HCT116 (cell line): ENCODE measurements at regions of chr15 and their contacts with region 1.

Region 1: GRCh38 chr15:85296615-85297402 is 83.6 kb upstream of the AKAP13 start:
- DNase-seq: peak; percentile 77
- ATAC-seq: peak; percentile 98
- H3K4me3 ChIP-seq: peak overlapping the region; percentile 21 to 44; a peak in 3 of 4 replicates
- H3K27ac ChIP-seq: no peak overlapping the region
- H3K4me1 ChIP-seq: peaks cover 0 to 7% of the 10 kb centered on the region in 2 experiments; a peak in 1 of 4 replicates
- H3K27me3 ChIP-seq: no peaks in the 10 kb centered on the region
- CTCF ChIP-seq: peak; percentile 79 to 82 (median 82); a peak in 5 of 6 replicates
- POLR2A ChIP-seq: no peak
- RAD21 ChIP-seq: peak; percentile 97

Region 2: GRCh38 chr15:85324202-85324601 is 27.4 kb after region 1 on chr15:
- CTCF ChIA-PET with region 1: no interaction called
- POLR2A ChIA-PET with region 1: no interaction called
- RAD21 ChIA-PET with region 1: no interaction called
- intact Hi-C with region 1: no loop called
- DNase-seq: no peak
- ATAC-seq: no peak
- H3K4me3 ChIP-seq: no peak overlapping the region
- H3K27ac ChIP-seq: no peak overlapping the region
- H3K4me1 ChIP-seq: no peaks in the 10 kb centered on the region
- H3K27me3 ChIP-seq: no peaks in the 10 kb centered on the region
- CTCF ChIP-seq: no peak
- POLR2A ChIP-seq: no peak
- RAD21 ChIP-seq: no peak

Region 3: DNA sequence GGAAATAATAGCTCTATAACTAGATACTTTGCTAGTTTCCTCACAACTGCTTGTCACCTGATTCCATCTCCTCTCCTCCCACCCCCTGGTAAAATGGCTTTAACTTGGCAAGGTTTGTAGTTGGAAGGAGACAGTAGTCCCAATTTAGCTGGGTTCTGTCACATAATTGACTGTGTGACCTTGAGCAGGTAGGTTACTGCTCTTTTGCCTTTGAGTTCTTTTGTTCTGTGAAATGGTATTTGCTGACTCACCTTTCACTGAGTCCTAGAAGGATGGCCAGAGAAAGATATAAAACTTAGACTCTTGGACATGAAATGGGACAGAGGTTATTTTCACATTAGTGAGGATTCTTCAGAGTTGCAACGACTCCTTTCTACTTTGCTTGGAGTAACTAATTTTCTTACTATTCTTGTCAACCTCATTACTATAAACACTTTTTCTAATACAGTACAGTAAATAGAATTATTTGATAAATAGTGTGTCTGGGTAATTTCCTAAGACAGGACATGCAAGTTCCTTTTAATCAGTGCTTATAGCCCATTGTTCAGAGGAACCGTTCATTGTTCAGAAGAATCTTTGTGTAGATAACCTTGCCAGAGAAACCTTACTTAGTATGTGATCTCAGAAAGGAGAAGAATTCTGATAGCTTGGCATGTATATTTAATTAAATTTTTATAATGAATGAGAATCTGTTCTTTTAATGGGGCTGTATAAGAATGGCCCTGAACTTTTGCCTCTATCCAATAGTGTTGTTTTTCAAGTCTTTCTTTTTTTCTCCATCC is 97.9 kb after region 1 on chr15:
- CTCF ChIA-PET with region 1: no interaction called
- POLR2A ChIA-PET with region 1: no interaction called
- RAD21 ChIA-PET with region 1: no interaction called
- intact Hi-C with region 1: no loop called
- DNase-seq: no peak
- ATAC-seq: peak; percentile 83
- H3K4me3 ChIP-seq: peak overlapping the region in 1 of 2 experiments; percentile 22; a peak in 2 of 4 replicates
- H3K27ac ChIP-seq: peak overlapping the region; percentile 10; the same call in 1 of the 2 replicates
- H3K4me1 ChIP-seq: peaks cover 38 to 52% of the 10 kb centered on the region in 2 experiments
- H3K27me3 ChIP-seq: no peaks in the 10 kb centered on the region
- CTCF ChIP-seq: no peak
- POLR2A ChIP-seq: no peak
- RAD21 ChIP-seq: no peak

Region 4: GRCh38 chr15:85412956-85413854 is 116.4 kb after region 1 on chr15:
- CTCF ChIA-PET with region 1: interaction called, 33 read pairs
- POLR2A ChIA-PET with region 1: no interaction called
- RAD21 ChIA-PET with region 1: interaction called in 1 of 2 experiments, 11 read pairs
- intact Hi-C with region 1: loop called (anchors 1 kb)
- DNase-seq: peak; percentile 88
- ATAC-seq: peak; percentile 98
- H3K4me3 ChIP-seq: peak overlapping the region; percentile 7 to 18; a peak in 3 of 4 replicates
- H3K27ac ChIP-seq: peak overlapping the region; percentile 69
- H3K4me1 ChIP-seq: peaks cover 36 to 58% of the 10 kb centered on the region in 2 experiments
- H3K27me3 ChIP-seq: no peaks in the 10 kb centered on the region
- CTCF ChIP-seq: 0 out of 6 replicates have a peak, but pooled peaks of 1 of the 3 experiments have one; percentile 31
- POLR2A ChIP-seq: no peak
- RAD21 ChIP-seq: peak; percentile 25; the same call in 1 of the 2 replicates

Region 5: DNA sequence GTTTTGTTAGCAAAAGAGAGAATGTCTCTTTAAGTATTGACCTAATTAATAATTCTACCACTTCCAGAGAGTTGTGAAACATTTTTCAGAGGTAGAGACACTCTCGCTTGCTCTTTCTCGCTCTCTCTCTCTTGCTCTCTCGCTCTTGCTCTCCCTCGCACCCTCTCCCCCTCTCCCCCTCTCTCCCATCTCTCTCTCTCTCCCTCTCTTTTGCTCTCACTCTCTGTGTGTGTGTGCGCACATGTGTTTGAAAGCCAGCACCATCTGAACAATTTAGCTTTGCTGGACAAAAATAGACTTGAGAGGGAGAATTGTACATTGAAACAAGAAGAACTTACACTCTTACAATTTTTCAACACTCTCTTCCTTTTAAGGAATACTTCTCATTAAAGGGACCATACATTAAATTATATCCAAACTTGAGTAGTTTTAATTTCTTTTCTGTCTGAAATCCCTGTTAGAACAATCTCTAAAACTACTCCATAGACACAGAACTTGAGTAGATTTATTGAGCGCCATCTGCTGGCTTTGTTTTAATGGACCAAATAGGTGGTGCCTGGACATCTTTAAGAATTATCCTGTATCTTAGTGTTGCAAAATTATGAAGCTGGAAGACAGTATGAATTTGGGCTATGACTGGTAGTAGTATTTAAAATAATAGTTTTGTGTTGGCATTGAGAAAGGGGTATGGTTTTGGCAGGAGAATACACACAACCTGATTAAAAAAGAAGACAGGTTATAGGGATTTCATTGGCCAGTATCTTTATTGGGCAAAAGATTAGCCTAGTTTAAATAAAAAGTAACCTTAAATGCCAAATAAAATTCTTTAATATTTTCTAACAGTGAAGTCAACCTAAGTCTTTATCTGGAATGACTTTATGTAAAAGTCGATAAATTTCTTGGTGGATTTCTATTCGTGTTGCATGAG is 208.2 kb after region 1 on chr15:
- CTCF ChIA-PET with region 1: interaction called, 13 read pairs
- POLR2A ChIA-PET with region 1: no interaction called
- RAD21 ChIA-PET with region 1: interaction called, 8 to 14 read pairs
- intact Hi-C with region 1: loop called (anchors 2 kb)
- DNase-seq: peak; percentile 53
- ATAC-seq: peak; percentile 83
- H3K4me3 ChIP-seq: no peak overlapping the region
- H3K27ac ChIP-seq: no peak overlapping the region
- H3K4me1 ChIP-seq: no peaks in the 10 kb centered on the region
- H3K27me3 ChIP-seq: no peaks in the 10 kb centered on the region
- CTCF ChIP-seq: peak; percentile 55 to 78 (median 65); a peak in 5 of 6 replicates
- POLR2A ChIP-seq: no peak
- RAD21 ChIP-seq: peak; percentile 70

Region 6: GRCh38 chr15:85730001-85730820 is 433.4 kb after region 1 on chr15:
- CTCF ChIA-PET with region 1: interaction called, 13 read pairs
- POLR2A ChIA-PET with region 1: no interaction called
- RAD21 ChIA-PET with region 1: interaction called, 3 read pairs
- intact Hi-C with region 1: loop called (anchors 10 kb)
- DNase-seq: peak; percentile 47
- ATAC-seq: peak; percentile 93
- H3K4me3 ChIP-seq: no peak overlapping the region
- H3K27ac ChIP-seq: no peak overlapping the region
- H3K4me1 ChIP-seq: no peaks in the 10 kb centered on the region
- H3K27me3 ChIP-seq: no peaks in the 10 kb centered on the region
- CTCF ChIP-seq: peak; percentile 61 to 81 (median 68)
- POLR2A ChIP-seq: no peak
- RAD21 ChIP-seq: peak; percentile 79

Region 7: DNA sequence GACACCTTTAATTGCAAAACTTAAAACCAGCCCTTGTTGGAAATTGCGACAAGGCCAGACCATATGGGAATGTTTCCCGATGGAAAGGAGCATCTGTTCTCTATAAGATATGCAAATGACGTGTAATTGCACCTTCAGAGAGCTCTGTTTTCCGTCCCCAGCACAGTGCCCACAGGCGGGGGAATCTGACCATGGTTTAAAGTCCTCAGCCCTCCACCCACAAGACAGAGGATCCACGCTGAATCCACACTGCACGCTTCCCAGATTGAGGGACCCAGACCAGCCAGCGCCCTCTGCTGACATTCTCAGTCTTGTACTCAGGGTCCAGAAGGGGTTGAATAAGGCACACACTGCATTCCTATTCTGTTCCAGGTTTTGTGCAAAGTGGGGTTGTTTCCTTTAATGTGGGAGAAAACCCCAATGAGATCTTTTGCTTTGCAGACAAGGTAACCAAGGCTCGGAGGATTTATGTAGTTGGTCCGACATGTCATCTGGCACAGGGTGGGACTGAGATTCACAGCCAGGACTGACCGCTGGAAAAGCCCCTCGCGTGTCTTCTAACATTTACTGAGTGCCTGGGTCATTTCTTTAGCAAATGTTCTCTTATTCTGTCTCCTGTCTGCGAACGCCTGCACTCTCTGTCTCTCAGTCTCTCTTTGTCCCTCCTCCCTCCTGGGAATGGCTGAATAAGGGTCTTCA is 534.8 kb after region 1 on chr15:
- CTCF ChIA-PET with region 1: no interaction called
- POLR2A ChIA-PET with region 1: no interaction called
- RAD21 ChIA-PET with region 1: no interaction called
- intact Hi-C with region 1: loop called (anchors 2 kb)
- DNase-seq: peak; percentile 37
- ATAC-seq: peak; percentile 99
- H3K4me3 ChIP-seq: no peak overlapping the region
- H3K27ac ChIP-seq: no peak overlapping the region
- H3K4me1 ChIP-seq: no peaks in the 10 kb centered on the region
- H3K27me3 ChIP-seq: no peaks in the 10 kb centered on the region
- CTCF ChIP-seq: peak; percentile 70 to 87 (median 76)
- POLR2A ChIP-seq: no peak
- RAD21 ChIP-seq: peak; percentile 83

Region 8: DNA sequence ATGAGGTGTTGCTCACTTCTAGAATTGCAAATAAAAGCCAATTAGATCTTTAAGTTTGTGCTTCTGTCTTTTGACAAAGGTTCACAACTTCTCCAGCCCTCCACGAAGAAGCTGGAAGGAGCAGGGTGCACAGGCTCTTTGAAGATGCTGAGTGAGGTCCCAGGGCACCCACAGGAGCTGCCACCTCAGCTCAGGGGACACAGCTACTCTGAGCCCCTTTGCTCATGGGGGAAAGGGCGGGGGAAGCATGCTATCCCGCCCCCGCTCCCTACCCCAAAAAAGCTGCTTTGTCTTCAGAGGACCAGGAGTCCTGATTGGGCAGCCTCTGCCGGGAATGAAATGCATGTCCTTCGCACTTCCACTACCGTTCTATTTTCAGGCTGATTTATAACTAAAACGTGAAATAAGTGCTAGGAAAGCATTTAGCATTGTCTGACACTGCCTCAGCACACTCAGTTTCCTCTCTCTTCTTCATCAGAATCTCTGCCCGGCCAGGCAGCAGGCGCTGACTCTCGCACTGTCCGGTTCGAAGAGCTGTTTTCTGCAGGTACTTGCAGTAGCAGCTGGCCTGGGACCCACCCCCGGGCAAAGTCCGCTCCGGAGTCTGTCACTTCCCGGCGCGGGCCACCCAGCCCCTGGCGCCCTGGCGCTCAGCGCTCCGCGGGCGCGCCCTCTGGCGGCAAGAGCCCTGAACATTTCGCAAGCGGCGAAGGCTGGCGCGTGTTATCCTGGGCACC is 543.4 kb after region 1 on chr15:
- CTCF ChIA-PET with region 1: interaction called, 14 read pairs
- POLR2A ChIA-PET with region 1: no interaction called
- RAD21 ChIA-PET with region 1: no interaction called
- intact Hi-C with region 1: no loop called
- DNase-seq: peak; percentile 77
- ATAC-seq: peak; percentile 98
- H3K4me3 ChIP-seq: peak overlapping the region; percentile 24 to 52
- H3K27ac ChIP-seq: no peak overlapping the region
- H3K4me1 ChIP-seq: peaks cover 0 to 11% of the 10 kb centered on the region in 2 experiments; a peak in 3 of 4 replicates
- H3K27me3 ChIP-seq: 0 out of 2 replicates have a peak, but pooled peaks cover 3% of the 10 kb centered on the region
- CTCF ChIP-seq: peak; percentile 87 to 91 (median 87)
- POLR2A ChIP-seq: no peak
- RAD21 ChIP-seq: peak; percentile 88